CD8-positive, alpha-beta T cell (primary cell): ENCODE measurements at regions of chr14 and their contacts with region 1.

Region 1: DNA sequence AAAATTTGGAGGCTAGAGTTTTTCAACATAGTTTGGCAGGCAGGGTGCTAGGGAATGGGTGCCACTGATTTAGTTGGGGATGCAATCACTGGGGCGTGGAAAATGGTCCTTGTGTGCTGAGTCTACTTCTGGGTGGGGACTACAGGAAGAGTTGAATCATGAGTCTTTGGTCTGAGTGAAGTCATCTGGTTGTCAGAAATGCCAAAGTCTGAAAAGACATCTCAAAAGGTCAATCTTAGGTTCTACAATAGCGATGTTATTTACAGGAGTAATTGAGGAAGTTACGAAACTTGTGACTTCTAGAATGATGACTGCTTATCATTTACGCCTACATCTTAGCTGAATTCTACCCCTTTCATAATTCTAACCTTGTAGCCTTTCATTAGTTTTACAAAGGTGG is 209.1 kb downstream of the NUBPL start:
- DNase-seq: no peak
- ATAC-seq: no peak
- H3K4me3 ChIP-seq: no peak overlapping the region
- H3K4me3 Mint-ChIP-seq: no peak overlapping the region
- H3K27ac ChIP-seq: no peak overlapping the region
- H3K27ac Mint-ChIP-seq: no peak overlapping the region
- H3K4me1 ChIP-seq: no peaks in the 10 kb centered on the region
- H3K4me1 Mint-ChIP-seq: no peaks in the 10 kb centered on the region
- H3K27me3 ChIP-seq: no peaks in the 10 kb centered on the region
- H3K27me3 Mint-ChIP-seq: no peaks in the 10 kb centered on the region
- CTCF ChIP-seq: no peak

Region 2: DNA sequence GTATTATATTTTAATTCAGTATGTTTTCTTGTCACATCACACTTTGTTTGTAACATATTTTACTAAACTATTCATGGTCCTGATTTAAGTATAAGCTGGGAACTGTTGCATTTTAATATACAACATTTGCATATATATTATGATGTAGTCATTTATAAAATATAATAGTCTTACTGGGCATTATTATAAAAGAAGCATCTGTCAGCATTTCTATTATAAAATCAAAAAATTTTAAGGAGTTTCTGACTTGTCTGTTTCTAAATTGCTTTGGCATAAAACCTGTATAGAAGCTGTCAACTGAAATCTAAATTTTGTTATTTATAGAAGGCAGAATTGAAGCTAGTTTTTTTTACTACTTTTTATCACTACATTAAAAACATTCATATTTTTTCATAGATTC is 42.5 kb before region 1 on chr14:
- CTCF ChIA-PET with region 1: no interaction called
- POLR2A ChIA-PET with region 1: no interaction called
- intact Hi-C with region 1: loop called in 1 of 2 experiments (anchors 1 kb)
- DNase-seq: no peak
- ATAC-seq: no peak
- H3K4me3 ChIP-seq: no peak overlapping the region
- H3K4me3 Mint-ChIP-seq: no peak overlapping the region
- H3K27ac ChIP-seq: no peak overlapping the region
- H3K27ac Mint-ChIP-seq: no peak overlapping the region
- H3K4me1 ChIP-seq: no peaks in the 10 kb centered on the region
- H3K4me1 Mint-ChIP-seq: no peaks in the 10 kb centered on the region
- H3K27me3 ChIP-seq: no peaks in the 10 kb centered on the region
- H3K27me3 Mint-ChIP-seq: no peaks in the 10 kb centered on the region
- CTCF ChIP-seq: no peak

Region 3: DNA sequence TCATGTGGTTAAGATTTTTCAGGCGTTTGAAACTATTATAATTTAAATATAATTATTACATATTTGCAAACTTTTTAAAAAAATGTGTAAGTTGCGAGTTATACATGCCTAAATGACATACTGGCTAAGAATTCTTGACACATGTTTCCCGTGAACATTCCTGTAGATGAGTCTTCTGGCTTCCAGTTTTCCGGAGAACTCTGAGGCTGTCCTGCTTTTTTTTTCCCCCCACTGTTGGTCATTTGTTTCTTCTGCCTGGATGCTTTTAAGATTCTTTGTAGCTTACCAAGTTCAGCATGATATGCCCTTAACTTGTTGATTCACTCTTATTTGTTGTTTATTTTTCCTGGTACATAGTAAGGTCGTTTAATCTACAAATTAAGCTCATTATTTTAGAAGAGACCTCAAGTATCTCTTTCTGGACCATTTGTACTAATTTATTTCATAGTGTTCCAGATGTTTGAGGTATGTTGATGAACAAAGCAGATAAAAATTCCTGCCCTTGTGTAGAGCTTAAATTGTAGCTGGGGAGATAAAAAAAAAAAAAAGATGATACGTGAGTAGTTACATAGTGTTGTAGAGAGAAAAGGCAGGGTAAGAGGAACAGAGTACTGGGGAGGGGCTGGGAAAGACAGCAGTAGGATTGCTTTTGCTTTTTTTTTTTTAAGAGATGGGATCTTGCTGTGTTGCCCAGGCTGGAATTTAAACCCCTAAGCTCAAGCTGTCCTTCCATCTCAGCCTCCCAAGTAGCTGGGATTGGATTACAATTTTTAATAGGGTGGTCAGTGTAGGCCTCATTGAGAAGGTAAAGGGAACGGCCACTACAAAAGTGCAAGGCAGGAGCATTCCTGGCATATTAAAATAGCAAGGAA is 339.6 kb after region 1 on chr14:
- CTCF ChIA-PET with region 1: no interaction called
- POLR2A ChIA-PET with region 1: no interaction called
- intact Hi-C with region 1: no loop called
- DNase-seq: no peak
- ATAC-seq: no peak
- H3K4me3 ChIP-seq: no peak overlapping the region
- H3K4me3 Mint-ChIP-seq: no peak overlapping the region
- H3K27ac ChIP-seq: no peak overlapping the region
- H3K27ac Mint-ChIP-seq: no peak overlapping the region
- H3K4me1 ChIP-seq: no peaks in the 10 kb centered on the region
- H3K4me1 Mint-ChIP-seq: peaks cover 18% of the 10 kb centered on the region
- H3K27me3 ChIP-seq: no peaks in the 10 kb centered on the region
- H3K27me3 Mint-ChIP-seq: no peaks in the 10 kb centered on the region
- CTCF ChIP-seq: no peak